ENCODE measurements at regions of chr5 and their contacts with region 1.

Region 1: GRCh38 chr5:33936004-33936380 is 194 bp upstream of the RXFP3 start:
- DNase-seq: peak in 8 of 14 experiments; percentile 1 to 51 (median 11)
- ATAC-seq: peak; percentile 61
- H3K4me3 ChIP-seq: no peak overlapping the region
- H3K4me3 Mint-ChIP-seq: no peak overlapping the region
- H3K27ac ChIP-seq: no peak overlapping the region
- H3K27ac Mint-ChIP-seq: no peak overlapping the region
- H3K4me1 ChIP-seq: peaks cover 7% of the 10 kb centered on the region
- H3K4me1 Mint-ChIP-seq: no peaks in the 10 kb centered on the region
- H3K27me3 ChIP-seq: peaks cover 37 to 56% of the 10 kb centered on the region in 2 experiments
- H3K27me3 Mint-ChIP-seq: peaks cover 69% of the 10 kb centered on the region
- CTCF ChIP-seq: no peak

Region 2: DNA sequence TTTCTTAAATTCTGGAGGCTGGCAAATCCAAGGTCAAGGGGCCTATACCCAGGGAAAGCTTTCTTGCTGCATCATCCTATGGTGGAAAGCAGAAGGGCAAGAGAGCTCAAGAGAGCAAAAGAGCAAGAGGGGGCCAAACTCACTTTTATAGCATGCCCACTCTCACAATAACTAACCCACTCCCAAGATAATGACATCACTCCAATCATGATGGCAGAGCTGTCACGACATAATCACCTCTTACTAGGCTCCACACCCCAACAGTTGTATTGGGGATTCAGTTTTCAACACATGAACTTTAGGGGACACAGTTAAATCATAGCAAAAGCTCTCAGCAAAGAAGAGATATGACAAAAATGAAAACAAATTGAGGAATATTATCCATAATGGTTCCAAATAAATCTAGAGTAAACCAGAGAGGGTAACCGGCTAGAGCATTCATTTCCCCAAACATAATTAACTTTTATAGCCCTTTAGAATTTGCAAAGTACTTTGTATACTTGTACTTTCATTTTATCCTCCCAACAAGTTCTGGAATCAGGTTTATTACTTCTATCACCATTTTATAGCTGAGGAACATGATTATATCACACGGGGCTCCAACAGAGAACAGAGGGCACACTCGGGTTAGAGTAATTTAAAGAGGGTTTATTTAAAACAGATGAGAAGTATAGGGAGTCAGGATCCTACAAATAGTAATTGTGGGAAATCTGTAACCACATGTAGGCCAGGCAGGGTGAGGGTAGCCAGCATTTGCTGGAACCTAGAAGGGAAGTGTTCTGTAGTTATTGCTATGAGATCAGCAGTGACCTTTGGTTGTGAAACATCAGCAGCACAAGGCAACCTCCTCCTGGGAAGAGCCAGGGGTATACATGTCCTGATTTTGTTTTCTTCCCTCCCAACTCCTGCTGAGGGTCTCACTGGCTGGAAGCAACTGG is 502.4 kb before region 1 on chr5:
- CTCF ChIA-PET with region 1: interaction called, 13 read pairs
- POLR2A ChIA-PET with region 1: interaction called, 4 read pairs
- intact Hi-C with region 1: loop called (anchors 1 kb)
- DNase-seq: no peak
- ATAC-seq: no peak
- H3K4me3 ChIP-seq: no peak overlapping the region
- H3K4me3 Mint-ChIP-seq: no peak overlapping the region
- H3K27ac ChIP-seq: no peak overlapping the region
- H3K27ac Mint-ChIP-seq: no peak overlapping the region
- H3K4me1 ChIP-seq: peaks cover 2% of the 10 kb centered on the region
- H3K4me1 Mint-ChIP-seq: peaks cover 7% of the 10 kb centered on the region
- H3K27me3 ChIP-seq: no peaks in the 10 kb centered on the region
- H3K27me3 Mint-ChIP-seq: peaks cover 2% of the 10 kb centered on the region
- CTCF ChIP-seq: no peak

Region 3: DNA sequence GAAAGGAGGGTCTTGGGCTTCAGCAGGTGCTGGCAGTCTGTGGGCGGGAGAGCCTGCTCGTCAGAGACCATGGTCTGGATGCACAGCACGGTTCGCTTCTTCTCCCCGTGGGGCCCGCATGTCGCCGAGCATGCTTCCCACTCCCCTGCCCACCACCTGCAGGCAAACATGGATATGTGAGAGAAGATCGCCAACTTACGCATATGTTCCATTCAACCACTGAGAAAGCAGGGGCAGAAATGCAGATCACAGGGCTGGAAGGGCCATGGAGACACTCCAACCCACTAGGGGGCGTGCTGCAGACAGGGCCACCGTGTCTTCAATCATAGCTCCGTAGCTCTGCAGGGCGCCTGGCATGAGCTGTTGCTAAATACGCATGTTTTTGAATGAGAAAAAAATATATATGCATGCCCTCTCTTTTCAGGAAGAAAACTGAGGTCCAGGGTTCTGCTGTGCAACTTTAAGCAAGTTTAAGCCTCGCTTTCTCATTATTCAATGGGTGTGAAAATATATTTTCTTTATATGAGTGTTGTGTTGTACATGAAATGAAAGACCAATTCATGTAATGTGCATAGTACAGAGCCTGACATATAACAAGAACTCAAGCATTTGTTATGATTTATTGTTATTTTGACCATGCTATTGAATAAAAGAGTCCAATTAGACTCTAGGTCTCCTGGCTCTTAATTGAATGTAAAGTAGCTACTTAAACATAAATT is 347.2 kb before region 1 on chr5:
- CTCF ChIA-PET with region 1: interaction called, 3 read pairs
- POLR2A ChIA-PET with region 1: no interaction called
- intact Hi-C with region 1: loop called (anchors 5 to 10 kb)
- DNase-seq: peak in 7 of 14 experiments; percentile 3 to 35 (median 19)
- ATAC-seq: no peak
- H3K4me3 ChIP-seq: no peak overlapping the region
- H3K4me3 Mint-ChIP-seq: no peak overlapping the region
- H3K27ac ChIP-seq: no peak overlapping the region
- H3K27ac Mint-ChIP-seq: no peak overlapping the region
- H3K4me1 ChIP-seq: no peaks in the 10 kb centered on the region
- H3K4me1 Mint-ChIP-seq: no peaks in the 10 kb centered on the region
- H3K27me3 ChIP-seq: no peaks in the 10 kb centered on the region
- H3K27me3 Mint-ChIP-seq: peaks cover 5% of the 10 kb centered on the region
- CTCF ChIP-seq: peak; percentile 23

Region 4: DNA sequence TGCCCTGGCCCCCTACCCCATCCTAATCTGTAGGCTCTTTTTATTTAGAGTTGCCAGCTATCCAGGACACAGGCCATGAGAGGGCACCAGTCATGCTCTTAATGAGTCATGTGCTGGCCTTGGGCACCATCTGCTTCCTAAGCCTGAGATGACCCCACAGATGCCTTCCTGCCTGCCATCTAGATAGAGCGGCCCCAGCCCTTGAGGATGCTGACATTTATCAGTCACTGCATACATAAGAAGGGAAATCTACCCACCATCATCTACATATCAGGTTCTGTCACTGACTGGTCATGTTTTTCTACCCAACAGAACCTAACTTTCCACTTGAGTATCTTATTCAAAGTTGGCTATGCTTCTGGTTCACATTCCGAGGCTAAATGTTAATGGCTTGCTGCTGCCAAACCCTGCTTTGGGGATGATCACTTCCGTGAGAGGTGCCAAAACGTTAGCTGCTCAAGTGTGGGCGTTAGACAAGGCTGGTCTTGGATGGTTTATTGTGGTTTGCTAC is 853.1 kb after region 1 on chr5:
- CTCF ChIA-PET with region 1: no interaction called
- POLR2A ChIA-PET with region 1: no interaction called
- intact Hi-C with region 1: no loop called
- DNase-seq: no peak
- ATAC-seq: no peak
- H3K4me3 ChIP-seq: no peak overlapping the region
- H3K4me3 Mint-ChIP-seq: no peak overlapping the region
- H3K27ac ChIP-seq: no peak overlapping the region
- H3K27ac Mint-ChIP-seq: no peak overlapping the region
- H3K4me1 ChIP-seq: no peaks in the 10 kb centered on the region
- H3K4me1 Mint-ChIP-seq: no peaks in the 10 kb centered on the region
- H3K27me3 ChIP-seq: no peaks in the 10 kb centered on the region
- H3K27me3 Mint-ChIP-seq: peaks cover 21% of the 10 kb centered on the region
- CTCF ChIP-seq: no peak